Endothelial cell of umbilical vein (primary cell): ENCODE measurements at regions of chr2 and their contacts with region 1.

Region 1: DNA sequence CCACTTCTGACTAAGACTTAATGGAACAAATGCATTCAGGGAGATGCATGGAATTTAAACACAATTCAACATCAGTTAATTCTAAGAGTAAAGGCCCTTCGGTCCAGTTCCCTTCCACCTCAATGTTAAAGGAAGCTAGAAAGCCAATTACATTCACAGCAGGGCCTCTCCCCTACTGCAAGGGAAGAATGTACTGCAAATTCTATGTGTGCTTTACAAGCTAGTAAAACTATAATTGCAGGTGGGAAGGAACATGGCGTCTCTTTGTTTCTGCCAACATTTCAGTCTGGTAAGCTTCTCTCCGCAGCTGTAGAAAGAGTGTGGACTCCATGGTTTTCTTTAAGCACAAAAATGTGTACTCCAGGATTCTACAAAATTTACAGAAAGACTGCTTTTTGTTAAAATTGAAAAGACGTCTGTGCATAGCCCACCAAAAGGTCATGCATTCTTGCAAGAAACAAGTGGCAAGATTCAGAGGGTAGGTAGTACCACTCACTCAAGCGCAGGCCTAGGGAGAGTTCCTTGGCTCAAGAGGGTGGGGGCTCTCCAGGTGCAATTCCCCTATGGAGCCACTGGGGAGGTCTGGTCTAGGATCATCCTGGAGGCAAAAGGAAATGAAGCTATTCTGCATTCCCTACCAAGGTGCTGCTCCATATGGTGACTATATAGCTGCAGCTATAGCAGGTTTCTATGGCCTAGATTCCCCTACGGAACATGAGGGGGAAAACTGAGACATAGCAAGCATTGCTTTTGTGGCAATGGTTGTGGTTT is 127.0 kb upstream of the FZD5 start:
- DNase-seq: no peak
- H3K4me3 ChIP-seq: no peak overlapping the region
- H3K27ac ChIP-seq: no peak overlapping the region
- H3K4me1 ChIP-seq: peaks cover 13% of the 10 kb centered on the region
- H3K27me3 ChIP-seq: no peaks in the 10 kb centered on the region
- CTCF ChIP-seq: peak in 1 of 2 donors; percentile 8
- POLR2A ChIP-seq: no peak

Region 2: DNA sequence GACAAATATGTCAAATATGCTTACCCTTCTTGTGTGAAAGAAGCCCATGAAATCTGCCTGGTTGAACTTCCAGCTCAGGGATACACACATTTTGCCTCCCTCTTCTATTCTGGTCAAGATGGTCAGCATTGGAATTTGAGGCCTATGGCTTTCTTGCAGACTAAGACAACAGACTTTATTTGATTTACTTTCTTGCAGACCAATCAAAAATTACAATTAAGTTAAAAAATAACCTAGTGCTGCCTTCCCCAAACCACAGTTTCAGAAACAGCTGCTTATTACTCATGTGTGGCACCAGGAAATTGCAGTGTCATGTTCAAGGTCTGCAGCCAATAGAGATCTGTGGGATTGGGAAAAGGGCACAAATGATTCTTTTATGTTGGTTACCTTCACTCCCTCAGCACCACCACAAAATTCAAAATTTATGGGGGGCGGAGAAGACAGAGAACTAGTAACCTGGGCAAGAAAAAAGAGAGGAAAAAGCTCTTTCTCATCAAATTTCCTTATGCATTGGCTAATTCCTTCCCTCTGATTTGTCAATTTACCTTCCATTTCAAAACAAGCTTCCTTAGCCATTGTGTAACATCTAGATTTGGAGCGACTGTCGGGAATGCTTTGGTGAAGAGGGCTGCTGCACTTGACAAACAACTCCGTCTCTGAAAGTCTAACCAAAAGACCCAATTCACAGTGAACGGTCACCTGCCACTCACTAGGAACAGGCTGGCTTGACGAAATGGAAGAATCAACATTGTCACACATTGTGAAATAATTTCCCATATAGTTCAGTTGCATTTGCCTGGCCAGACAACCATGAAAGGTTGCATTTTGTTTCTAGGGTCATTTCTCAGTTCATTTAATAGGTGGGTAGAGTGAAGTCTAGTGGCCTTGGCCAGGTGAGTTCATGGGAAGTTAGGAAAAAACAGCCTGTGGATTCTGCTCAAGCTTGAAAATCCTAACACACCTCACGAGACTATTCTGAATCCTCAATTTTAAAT is 26.6 kb before region 1 on chr2:
- CTCF ChIA-PET with region 1: interaction called, 10 read pairs
- POLR2A ChIA-PET with region 1: no interaction called
- dilution Hi-C with region 1: no loop called
- intact Hi-C with region 1: no loop called
- DNase-seq: peak; percentile 16
- H3K4me3 ChIP-seq: no peak overlapping the region
- H3K27ac ChIP-seq: no peak overlapping the region
- H3K4me1 ChIP-seq: no peaks in the 10 kb centered on the region
- H3K27me3 ChIP-seq: no peaks in the 10 kb centered on the region
- CTCF ChIP-seq: no peak
- POLR2A ChIP-seq: no peak

Region 3: GRCh38 chr2:207883002-207883780 is 13.5 kb before region 1 on chr2:
- CTCF ChIA-PET with region 1: interaction called, 10 read pairs
- POLR2A ChIA-PET with region 1: no interaction called
- dilution Hi-C with region 1: no loop called
- intact Hi-C with region 1: no loop called
- DNase-seq: no peak
- H3K4me3 ChIP-seq: no peak overlapping the region
- H3K27ac ChIP-seq: no peak overlapping the region
- H3K4me1 ChIP-seq: peaks cover 4% of the 10 kb centered on the region
- H3K27me3 ChIP-seq: no peaks in the 10 kb centered on the region
- CTCF ChIP-seq: no peak
- POLR2A ChIP-seq: no peak